A673 (cell line): ENCODE measurements at regions of chr1 and their contacts with region 1.

Region 1: DNA sequence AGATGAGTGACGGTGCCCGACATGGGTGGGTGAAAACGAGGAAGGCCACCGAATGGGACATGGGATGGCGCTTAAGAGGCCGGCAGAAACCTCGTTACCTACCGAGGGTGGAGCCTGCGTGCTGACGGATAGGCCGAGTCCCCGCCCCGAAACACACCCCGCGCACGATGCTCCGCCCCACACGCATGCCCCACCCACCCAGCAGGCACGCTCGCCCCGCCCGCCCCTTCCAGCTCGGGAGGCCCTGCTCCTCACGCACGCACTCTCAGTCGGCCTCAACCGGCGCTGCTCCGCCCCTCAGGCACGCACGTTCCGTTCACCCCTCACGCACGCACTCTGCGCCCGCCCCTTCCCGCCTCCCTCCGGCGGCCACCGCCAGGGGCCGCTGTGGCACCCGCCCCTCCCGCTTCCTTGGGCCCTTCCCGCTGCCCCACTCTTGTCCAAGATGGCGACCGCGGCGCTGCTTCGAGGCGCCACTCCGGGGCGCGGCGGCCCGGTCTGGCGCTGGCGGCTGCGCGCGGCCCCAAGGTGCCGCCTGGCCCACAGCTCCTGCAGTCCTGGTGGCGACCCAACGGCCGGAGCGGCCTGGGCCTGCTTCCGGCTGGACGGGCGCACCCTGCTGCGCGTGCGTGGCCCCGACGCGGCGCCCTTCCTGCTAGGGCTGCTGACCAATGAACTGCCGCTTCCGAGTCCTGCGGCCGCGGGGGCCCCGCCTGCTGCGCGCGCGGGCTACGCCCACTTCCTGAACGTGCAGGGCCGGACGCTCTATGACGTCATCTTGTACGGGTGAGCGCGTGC is at the start of gene IBA57:
- DNase-seq: peak; percentile 99
- H3K4me3 ChIP-seq: peak within 1 kb of the TSS; percentile 80
- H3K27ac ChIP-seq: peak within 1 kb of the TSS; percentile 100
- H3K4me1 ChIP-seq: peaks cover 11% of the 10 kb centered on the region
- H3K27me3 ChIP-seq: no peaks in the 10 kb centered on the region
- CTCF ChIP-seq: peak; percentile 91
- total RNA-seq, gene IBA57: 10.6 and 12.1 TPM in 2 replicates

Region 2: DNA sequence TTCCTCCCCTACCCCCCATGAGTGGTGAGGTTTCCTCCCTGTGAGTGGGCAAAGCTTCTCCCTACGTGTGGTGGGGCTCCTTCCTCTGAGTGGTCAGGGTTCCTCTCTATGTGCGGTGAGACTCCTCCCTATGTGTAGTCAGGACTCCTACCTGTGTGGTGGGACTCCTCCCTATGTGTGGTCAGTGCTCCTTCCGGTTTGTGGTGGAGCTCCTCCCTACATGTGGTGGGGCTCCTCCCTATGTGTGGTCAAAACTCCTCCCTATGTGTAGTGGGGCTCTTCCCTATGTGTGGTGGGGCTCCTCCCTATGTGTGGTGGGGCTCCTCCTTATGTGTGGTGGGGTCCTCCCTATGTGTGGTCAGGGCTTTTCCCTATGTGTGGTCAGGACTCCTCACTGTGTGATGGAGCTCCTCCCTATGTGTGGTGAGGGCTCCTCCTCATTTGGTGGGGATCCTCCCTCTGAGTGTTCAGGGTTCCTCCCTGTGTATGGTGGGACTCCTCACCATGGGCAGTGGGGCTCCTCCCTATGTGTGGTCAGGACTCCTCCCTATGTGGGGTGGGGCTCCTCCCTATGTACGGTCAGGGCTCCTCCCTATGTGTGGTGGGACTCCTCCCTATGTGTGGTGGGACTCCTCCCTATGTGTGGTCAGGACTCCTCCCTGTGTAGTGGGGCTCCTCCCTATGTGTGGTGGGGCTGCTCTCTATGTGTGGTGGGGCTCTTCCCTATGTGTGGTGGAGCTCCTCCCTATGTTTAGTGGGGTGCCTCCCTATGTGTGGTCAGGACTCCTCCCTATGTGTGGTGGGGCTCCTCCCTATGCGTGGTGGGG is 321.0 kb before region 1 on chr1:
- CTCF ChIA-PET with region 1: no interaction called
- POLR2A ChIA-PET with region 1: no interaction called
- intact Hi-C with region 1: no loop called
- DNase-seq: no peak
- H3K4me3 ChIP-seq: no peak overlapping the region
- H3K27ac ChIP-seq: no peak overlapping the region
- H3K4me1 ChIP-seq: no peaks in the 10 kb centered on the region
- H3K27me3 ChIP-seq: no peaks in the 10 kb centered on the region
- CTCF ChIP-seq: no peak

Region 3: DNA sequence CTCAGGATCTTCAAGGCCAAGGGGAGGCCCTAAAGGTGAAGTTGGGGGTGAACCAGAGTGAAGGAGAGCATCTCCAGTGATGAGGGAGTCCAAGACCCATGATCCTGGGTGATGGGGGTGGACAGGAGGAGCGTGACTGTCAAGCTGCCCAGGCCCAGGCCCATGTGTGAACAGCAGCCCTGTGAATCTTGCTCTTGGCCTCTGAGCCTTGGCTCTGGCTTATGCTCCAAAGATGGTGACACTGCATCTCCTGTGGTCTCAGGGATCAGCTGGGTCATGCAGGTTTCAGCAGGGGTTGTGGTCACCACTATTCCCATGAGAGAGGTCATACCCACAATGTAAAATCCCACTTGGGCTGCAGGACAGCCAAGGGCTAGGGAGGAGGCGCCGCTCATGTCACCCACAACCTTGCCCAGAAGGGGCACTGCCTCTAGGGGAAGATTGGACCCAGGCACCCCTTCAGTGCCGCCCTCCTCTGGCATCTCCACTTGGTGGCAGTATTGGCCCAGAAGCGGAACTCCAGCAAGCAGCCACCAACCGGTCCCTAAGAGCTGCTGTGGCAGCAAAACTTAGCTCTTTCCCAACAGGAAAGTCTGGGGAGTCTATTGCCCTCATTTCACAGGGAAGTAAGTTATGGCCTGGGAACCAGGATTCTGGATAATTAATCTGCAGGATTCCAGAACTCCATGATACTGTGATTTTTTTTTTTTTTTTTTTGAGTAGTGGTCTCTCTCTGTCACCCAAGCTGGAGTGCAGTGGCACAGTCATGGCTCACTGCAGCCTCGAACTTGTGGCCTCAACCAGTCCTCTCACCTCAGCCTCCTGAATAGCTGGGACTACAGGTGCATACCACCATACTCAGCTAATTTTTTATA is 166.3 kb before region 1 on chr1:
- CTCF ChIA-PET with region 1: interaction called, 13 read pairs
- POLR2A ChIA-PET with region 1: no interaction called
- intact Hi-C with region 1: no loop called
- DNase-seq: peak; percentile 83
- H3K4me3 ChIP-seq: no peak overlapping the region
- H3K27ac ChIP-seq: no peak overlapping the region
- H3K4me1 ChIP-seq: no peaks in the 10 kb centered on the region
- H3K27me3 ChIP-seq: peaks cover 42% of the 10 kb centered on the region
- CTCF ChIP-seq: peak; percentile 87

Region 4: DNA sequence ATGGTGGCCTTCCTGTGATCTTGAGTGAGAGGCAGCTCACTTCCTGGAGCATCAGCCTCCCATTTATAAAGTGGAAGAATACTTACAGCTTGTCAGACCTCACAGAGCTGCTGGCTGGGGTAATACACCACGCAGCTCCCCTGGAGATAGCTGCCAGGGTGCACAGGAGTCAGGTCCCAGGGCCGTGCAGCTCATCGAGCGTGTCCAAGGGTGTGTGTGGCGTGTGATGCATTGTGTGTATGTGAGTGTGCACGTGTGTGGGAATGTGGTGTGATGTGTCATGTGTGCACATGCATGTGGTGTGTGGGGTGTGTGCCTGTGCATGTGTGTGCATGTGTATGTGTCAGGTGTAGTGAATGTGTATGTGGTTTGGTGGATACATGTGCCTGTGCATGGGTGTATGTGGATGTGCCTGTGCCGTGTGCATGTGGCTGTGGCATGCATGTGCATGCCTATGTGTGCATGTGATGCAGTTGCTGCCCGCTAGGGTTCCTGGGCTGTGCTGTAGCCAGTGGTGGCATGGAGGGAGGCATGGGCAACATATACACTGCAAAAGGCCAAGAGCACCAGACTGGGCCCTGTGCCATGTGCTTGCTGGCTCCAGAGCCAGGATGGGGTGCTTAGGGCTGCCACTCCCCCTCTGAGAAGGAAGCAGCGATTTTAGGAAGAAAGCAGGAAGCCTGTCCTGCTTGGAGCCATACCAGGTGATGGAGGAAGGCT is 134.1 kb before region 1 on chr1:
- CTCF ChIA-PET with region 1: no interaction called
- POLR2A ChIA-PET with region 1: no interaction called
- intact Hi-C with region 1: no loop called
- DNase-seq: no peak
- H3K4me3 ChIP-seq: no peak overlapping the region
- H3K27ac ChIP-seq: no peak overlapping the region
- H3K4me1 ChIP-seq: no peaks in the 10 kb centered on the region
- H3K27me3 ChIP-seq: no peaks in the 10 kb centered on the region
- CTCF ChIP-seq: no peak

Region 5: DNA sequence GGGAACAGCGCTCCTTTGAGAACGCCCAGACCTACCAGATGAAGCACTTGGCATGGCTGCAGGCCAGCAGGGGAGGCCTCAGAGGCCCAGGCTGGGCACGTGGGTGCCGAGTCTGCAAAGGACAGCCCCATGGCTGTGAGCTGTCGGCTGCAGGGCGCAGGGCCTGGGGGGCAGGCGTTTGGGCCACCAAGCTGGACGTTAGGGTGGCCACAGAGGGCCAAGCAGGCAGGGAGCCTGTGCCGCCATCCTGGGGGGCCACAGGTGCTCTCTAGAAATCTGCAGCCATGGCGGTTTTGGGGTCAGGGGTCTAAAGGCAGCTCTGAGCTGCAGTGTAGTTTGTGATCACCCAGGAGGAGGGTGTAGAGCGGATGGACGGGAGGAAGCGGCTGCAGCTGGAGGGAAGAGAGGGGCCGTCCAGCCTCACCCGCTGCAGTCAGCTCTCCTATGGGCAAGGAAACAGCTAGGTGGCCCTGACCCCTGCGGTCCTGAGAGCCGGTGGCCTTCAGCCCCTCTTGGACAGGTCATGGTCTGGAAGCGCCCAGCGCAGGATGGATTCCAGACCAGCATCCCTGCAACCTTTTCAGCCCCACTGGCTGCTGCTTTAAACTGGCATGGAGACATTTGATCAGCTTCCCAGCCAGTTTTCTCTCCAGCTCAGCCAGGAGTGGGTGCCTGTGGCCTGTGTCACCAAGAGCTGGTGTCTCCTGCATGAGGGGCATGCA is 11.1 kb after region 1 on chr1:
- CTCF ChIA-PET with region 1: interaction called, 13 read pairs
- POLR2A ChIA-PET with region 1: no interaction called
- intact Hi-C with region 1: no loop called
- DNase-seq: no peak
- H3K4me3 ChIP-seq: no peak overlapping the region
- H3K27ac ChIP-seq: no peak overlapping the region
- H3K4me1 ChIP-seq: no peaks in the 10 kb centered on the region
- H3K27me3 ChIP-seq: no peaks in the 10 kb centered on the region
- CTCF ChIP-seq: no peak

Region 6: DNA sequence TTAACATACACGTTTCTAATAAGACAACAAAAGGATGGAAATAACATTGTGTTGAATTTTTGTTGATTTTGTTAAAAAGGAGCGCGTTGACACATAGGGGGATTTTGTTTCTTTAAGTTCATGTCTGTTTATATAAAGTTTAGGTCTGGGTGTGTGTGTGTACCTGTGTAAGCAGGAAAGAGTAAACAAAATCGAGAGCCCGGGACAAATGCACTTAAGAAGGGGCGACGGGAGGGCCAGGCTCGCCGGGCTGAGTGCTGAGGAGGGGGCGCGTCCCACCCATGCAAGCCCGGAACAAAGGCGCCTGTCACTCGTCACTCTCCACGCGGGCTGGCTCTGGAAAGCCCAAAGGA is 279.9 kb after region 1 on chr1:
- CTCF ChIA-PET with region 1: no interaction called
- POLR2A ChIA-PET with region 1: no interaction called
- intact Hi-C with region 1: no loop called
- DNase-seq: no peak
- H3K4me3 ChIP-seq: peak overlapping the region; percentile 28
- H3K27ac ChIP-seq: no peak overlapping the region
- H3K4me1 ChIP-seq: peaks cover 4% of the 10 kb centered on the region
- H3K27me3 ChIP-seq: peaks cover 21% of the 10 kb centered on the region
- CTCF ChIP-seq: no peak